ENCODE measurements at regions of chr1 and their contacts with region 1.

Region 1: GRCh38 chr1:51235673-51236530 is at the start of gene RNF11:
- H3K4me3 ChIP-seq: peak within 1 kb of the TSS; percentile 98
- H3K27ac ChIP-seq: peak within 1 kb of the TSS; percentile 93
- H3K4me1 ChIP-seq: peaks cover 10% of the 10 kb centered on the region; the same call in 1 of the 2 replicates
- CTCF ChIP-seq: no peak

Region 2: GRCh38 chr1:51218570-51218969 is 17.3 kb before region 1 on chr1:
- CTCF ChIA-PET with region 1: interaction called, 4 read pairs
- POLR2A ChIA-PET with region 1: interaction called, 10 read pairs
- H3K4me3 ChIP-seq: no peak overlapping the region
- H3K27ac ChIP-seq: no peak overlapping the region
- H3K4me1 ChIP-seq: no peaks in the 10 kb centered on the region
- CTCF ChIP-seq: no peak

Measured in HEK293 (cell line).